ENCODE measurements at regions of chr15 and their contacts with region 1.

Region 1: DNA sequence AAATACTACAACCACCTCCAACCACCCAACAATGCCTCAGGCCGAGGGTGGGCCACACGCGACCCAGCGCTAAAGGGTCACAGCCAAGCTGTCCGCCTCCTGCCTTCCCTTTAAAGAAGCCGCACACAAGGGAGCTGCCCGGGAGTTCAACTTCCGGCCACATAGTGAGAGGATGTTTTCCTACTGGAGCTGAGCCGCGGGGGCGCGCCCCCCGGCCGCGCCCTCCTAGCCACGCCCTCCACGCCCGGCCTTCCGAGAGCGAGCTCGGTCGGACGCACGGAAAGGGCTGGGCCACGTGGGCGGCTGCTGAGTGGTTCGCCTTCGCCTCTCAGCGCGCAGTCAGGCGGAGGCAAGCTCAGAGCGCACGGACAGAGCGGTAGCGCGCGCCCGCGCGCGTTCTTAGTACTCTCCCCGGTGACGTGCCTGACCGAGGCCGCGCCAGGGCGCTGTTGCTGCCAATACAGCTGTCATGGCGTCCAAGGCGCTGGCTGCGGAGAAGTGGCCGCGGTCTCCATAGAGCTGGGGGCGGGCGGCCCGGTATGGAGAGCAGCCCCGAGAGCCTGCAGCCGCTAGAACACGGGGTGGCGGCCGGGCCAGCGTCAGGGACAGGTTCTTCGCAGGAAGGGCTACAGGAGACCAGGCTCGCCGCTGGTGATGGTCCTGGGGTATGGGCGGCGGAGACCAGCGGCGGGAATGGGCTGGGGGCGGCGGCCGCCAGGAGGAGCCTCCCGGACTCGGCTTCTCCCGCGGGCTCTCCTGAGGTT is at the start of gene MINDY2:
- DNase-seq: peak; percentile 88 to 95 (median 92)
- H3K4me3 ChIP-seq: peak within 1 kb of the TSS; percentile 73 to 90
- H3K4me3 Mint-ChIP-seq: peak within 1 kb of the TSS in 4 of 8 donors; percentile 91 to 95 (median 94)
- H3K27ac ChIP-seq: peak within 1 kb of the TSS; percentile 74
- H3K27ac Mint-ChIP-seq: peak within 1 kb of the TSS; percentile 88 to 96 (median 94)
- H3K4me1 ChIP-seq: peaks cover 48% of the 10 kb centered on the region
- H3K4me1 Mint-ChIP-seq: peaks cover 9 to 14% (median 10%) of the 10 kb centered on the region in 4 donors
- H3K27me3 ChIP-seq: no peaks in the 10 kb centered on the region
- H3K27me3 Mint-ChIP-seq: no peaks in the 10 kb centered on the region
- total RNA-seq, gene MINDY2: 15.4 to 17.3 TPM

Region 2: GRCh38 chr15:58227706-58228543 is 543.1 kb before region 1 on chr15:
- CTCF ChIA-PET with region 1: interaction called, 14 read pairs
- POLR2A ChIA-PET with region 1: interaction called, 3 read pairs
- intact Hi-C with region 1: no loop called
- DNase-seq: peak in 4 of 5 donors; percentile 49 to 58 (median 54)
- H3K4me3 ChIP-seq: no peak overlapping the region
- H3K4me3 Mint-ChIP-seq: no peak overlapping the region
- H3K27ac ChIP-seq: no peak overlapping the region
- H3K27ac Mint-ChIP-seq: no peak overlapping the region
- H3K4me1 ChIP-seq: no peaks in the 10 kb centered on the region
- H3K4me1 Mint-ChIP-seq: peaks cover 4 to 14% (median 11%) of the 10 kb centered on the region in 4 donors
- H3K27me3 ChIP-seq: no peaks in the 10 kb centered on the region
- H3K27me3 Mint-ChIP-seq: peaks cover 7 to 17% of the 10 kb centered on the region in 2 donors

Region 3: DNA sequence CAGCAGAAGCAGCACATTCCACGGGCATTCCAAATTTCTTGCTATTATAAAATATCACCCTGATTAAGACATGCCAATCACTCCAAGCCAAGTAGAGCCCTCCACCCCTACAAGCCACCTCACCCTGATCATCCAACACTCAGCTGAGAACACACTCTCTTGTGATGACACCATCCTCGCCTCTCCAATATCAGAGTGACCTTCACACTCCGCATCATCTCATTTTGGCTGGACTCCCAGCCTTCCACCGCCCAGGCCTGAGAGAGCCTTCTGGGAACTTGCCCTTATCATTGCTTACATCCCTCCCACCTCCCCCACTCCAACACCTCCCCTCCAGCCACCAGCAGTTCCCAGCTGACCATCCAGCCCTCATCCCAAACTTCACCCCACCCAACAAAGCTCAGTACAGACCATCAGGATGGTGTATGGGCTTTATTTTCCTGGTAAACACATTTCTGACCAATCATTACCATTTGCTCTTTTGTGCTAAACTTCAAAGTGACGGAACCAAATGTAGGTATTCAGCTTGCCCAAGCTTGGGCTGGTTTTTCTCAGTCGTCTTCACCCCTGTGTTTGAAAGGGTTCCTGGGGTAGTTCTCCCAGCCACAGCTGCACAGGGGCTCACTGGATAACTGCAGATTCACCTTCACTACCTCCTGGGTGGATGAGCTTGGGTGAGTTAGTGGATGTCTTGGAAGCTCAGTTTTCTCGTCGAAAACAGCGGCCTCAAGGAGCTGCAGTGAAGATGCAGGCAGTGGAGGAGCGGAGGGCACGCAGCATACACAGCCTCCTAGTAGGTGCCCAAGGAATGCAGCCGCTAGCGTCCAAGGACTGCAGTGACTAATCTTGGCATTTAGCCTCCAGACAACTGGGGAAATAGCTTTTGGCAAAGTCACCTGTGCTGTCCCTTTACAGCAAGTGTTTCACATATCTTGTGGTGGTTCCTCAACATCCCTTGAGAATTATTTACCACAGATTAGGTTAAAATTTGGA is 224.1 kb before region 1 on chr15:
- CTCF ChIA-PET with region 1: no interaction called
- POLR2A ChIA-PET with region 1: no interaction called
- intact Hi-C with region 1: no loop called
- DNase-seq: no peak
- H3K4me3 ChIP-seq: no peak overlapping the region
- H3K4me3 Mint-ChIP-seq: no peak overlapping the region
- H3K27ac ChIP-seq: no peak overlapping the region
- H3K27ac Mint-ChIP-seq: peak overlapping the region in 4 of 7 donors; percentile 11 to 92 (median 58)
- H3K4me1 ChIP-seq: peaks cover 19% of the 10 kb centered on the region
- H3K4me1 Mint-ChIP-seq: peaks cover 18 to 37% (median 25%) of the 10 kb centered on the region in 4 donors
- H3K27me3 ChIP-seq: no peaks in the 10 kb centered on the region
- H3K27me3 Mint-ChIP-seq: no peaks in the 10 kb centered on the region

Region 4: GRCh38 chr15:58628206-58628947 is 142.7 kb before region 1 on chr15:
- CTCF ChIA-PET with region 1: interaction called, 5 read pairs
- POLR2A ChIA-PET with region 1: interaction called, 5 read pairs
- intact Hi-C with region 1: loop called (anchors 5 kb)
- DNase-seq: peak in 4 of 5 donors; percentile 13 to 31 (median 24)
- H3K4me3 ChIP-seq: peak overlapping the region; percentile 36 to 57
- H3K4me3 Mint-ChIP-seq: peak overlapping the region; percentile 79 to 88 (median 86)
- H3K27ac ChIP-seq: peak overlapping the region; percentile 80
- H3K27ac Mint-ChIP-seq: peak overlapping the region; percentile 94 to 98 (median 96)
- H3K4me1 ChIP-seq: peaks cover 55% of the 10 kb centered on the region
- H3K4me1 Mint-ChIP-seq: peaks cover 39 to 64% (median 51%) of the 10 kb centered on the region in 4 donors
- H3K27me3 ChIP-seq: no peaks in the 10 kb centered on the region
- H3K27me3 Mint-ChIP-seq: no peaks in the 10 kb centered on the region

Region 5: GRCh38 chr15:58749532-58750337 is 21.3 kb before region 1 on chr15 and contains the start of gene ADAM10:
- CTCF ChIA-PET with region 1: interaction called, 56 read pairs
- POLR2A ChIA-PET with region 1: interaction called, 119 read pairs
- intact Hi-C with region 1: loop called (anchors 1 kb)
- DNase-seq: peak; percentile 93 to 98 (median 94)
- H3K4me3 ChIP-seq: peak within 1 kb of the TSS; percentile 68 to 96
- H3K4me3 Mint-ChIP-seq: peak within 1 kb of the TSS; percentile 96 to 99 (median 97)
- H3K27ac ChIP-seq: peak within 1 kb of the TSS; percentile 79
- H3K27ac Mint-ChIP-seq: peak within 1 kb of the TSS; percentile 94 to 96 (median 95)
- H3K4me1 ChIP-seq: peaks cover 46% of the 10 kb centered on the region
- H3K4me1 Mint-ChIP-seq: peaks cover 26 to 49% (median 36%) of the 10 kb centered on the region in 4 donors
- H3K27me3 ChIP-seq: no peaks in the 10 kb centered on the region
- H3K27me3 Mint-ChIP-seq: no peaks in the 10 kb centered on the region
- total RNA-seq, gene ADAM10: 135 TPM

Region 6: GRCh38 chr15:58761010-58761388 is 10.0 kb before region 1 on chr15:
- CTCF ChIA-PET with region 1: interaction called, 7 read pairs
- POLR2A ChIA-PET with region 1: interaction called, 18 read pairs
- intact Hi-C with region 1: no loop called
- DNase-seq: no peak
- H3K4me3 ChIP-seq: no peak overlapping the region
- H3K4me3 Mint-ChIP-seq: no peak overlapping the region
- H3K27ac ChIP-seq: no peak overlapping the region
- H3K27ac Mint-ChIP-seq: no peak overlapping the region
- H3K4me1 ChIP-seq: no peaks in the 10 kb centered on the region
- H3K4me1 Mint-ChIP-seq: no peaks in the 10 kb centered on the region
- H3K27me3 ChIP-seq: no peaks in the 10 kb centered on the region
- H3K27me3 Mint-ChIP-seq: peaks cover 0 to 3% of the 10 kb centered on the region in 2 donors

Region 7: GRCh38 chr15:58933281-58934113 is 162.5 kb after region 1 on chr15 and contains the start of gene SLTM:
- CTCF ChIA-PET with region 1: interaction called, 3 read pairs
- POLR2A ChIA-PET with region 1: interaction called, 19 read pairs
- intact Hi-C with region 1: loop called (anchors 1 kb)
- DNase-seq: peak; percentile 93 to 95 (median 94)
- H3K4me3 ChIP-seq: peak within 1 kb of the TSS; percentile 59 to 97
- H3K4me3 Mint-ChIP-seq: peak within 1 kb of the TSS; percentile 96 to 100 (median 99)
- H3K27ac ChIP-seq: peak within 1 kb of the TSS; percentile 98
- H3K27ac Mint-ChIP-seq: peak within 1 kb of the TSS; percentile 94 to 100 (median 100)
- H3K4me1 ChIP-seq: peaks cover 25% of the 10 kb centered on the region
- H3K4me1 Mint-ChIP-seq: peaks cover 9 to 35% (median 19%) of the 10 kb centered on the region in 4 donors
- H3K27me3 ChIP-seq: no peaks in the 10 kb centered on the region
- H3K27me3 Mint-ChIP-seq: no peaks in the 10 kb centered on the region
- total RNA-seq, gene SLTM: 149 to 153 TPM

Region 8: DNA sequence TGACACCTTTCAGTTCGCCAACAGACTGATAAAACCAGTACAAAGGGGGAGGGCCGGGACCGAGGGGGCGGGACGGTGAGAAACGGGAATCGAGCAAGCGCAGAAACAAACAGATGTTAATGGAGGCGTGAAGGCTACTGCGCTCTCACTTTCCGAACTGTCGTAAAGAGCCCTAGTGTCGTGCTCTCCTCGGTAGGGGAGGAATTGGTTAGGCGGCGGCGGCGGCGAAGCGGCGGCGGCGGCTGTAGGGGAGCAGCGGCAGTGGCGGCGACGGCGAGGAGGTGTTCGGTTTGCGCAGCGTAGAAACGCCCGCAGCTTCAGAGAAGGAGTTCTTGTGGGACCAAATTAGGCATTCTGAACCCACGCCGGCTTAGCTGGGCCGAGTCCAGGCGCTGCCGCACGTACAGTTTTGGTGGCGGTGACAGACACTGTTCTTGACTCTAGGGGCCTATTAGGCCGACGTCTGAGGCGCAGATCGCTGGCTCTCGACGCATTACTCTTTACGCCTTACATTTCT is 216.5 kb after region 1 on chr15 and contains the start of gene RNF111:
- CTCF ChIA-PET with region 1: no interaction called
- POLR2A ChIA-PET with region 1: interaction called, 3 read pairs
- intact Hi-C with region 1: loop called (anchors 1 kb)
- DNase-seq: peak; percentile 90 to 97 (median 91)
- H3K4me3 ChIP-seq: peak within 1 kb of the TSS; percentile 91 to 92
- H3K4me3 Mint-ChIP-seq: peak within 1 kb of the TSS; percentile 93 to 98 (median 96)
- H3K27ac ChIP-seq: peak within 1 kb of the TSS; percentile 89
- H3K27ac Mint-ChIP-seq: peak within 1 kb of the TSS; percentile 84 to 97 (median 94)
- H3K4me1 ChIP-seq: peaks cover 40% of the 10 kb centered on the region
- H3K4me1 Mint-ChIP-seq: peaks cover 31 to 52% (median 42%) of the 10 kb centered on the region in 4 donors
- H3K27me3 ChIP-seq: no peaks in the 10 kb centered on the region
- H3K27me3 Mint-ChIP-seq: no peaks in the 10 kb centered on the region
- total RNA-seq, gene RNF111: 54.9 to 60.9 TPM

Region 9: GRCh38 chr15:59814409-59814808 is 1043.4 kb after region 1 on chr15:
- CTCF ChIA-PET with region 1: no interaction called
- POLR2A ChIA-PET with region 1: no interaction called
- intact Hi-C with region 1: no loop called
- DNase-seq: peak; percentile 62 to 75 (median 68)
- H3K4me3 ChIP-seq: no peak overlapping the region
- H3K4me3 Mint-ChIP-seq: peak overlapping the region in 7 of 8 donors; percentile 1 to 69 (median 53)
- H3K27ac ChIP-seq: peak overlapping the region; percentile 8
- H3K27ac Mint-ChIP-seq: peak overlapping the region; percentile 45 to 91 (median 86)
- H3K4me1 ChIP-seq: peaks cover 25% of the 10 kb centered on the region
- H3K4me1 Mint-ChIP-seq: peaks cover 16 to 27% (median 25%) of the 10 kb centered on the region in 4 donors
- H3K27me3 ChIP-seq: no peaks in the 10 kb centered on the region
- H3K27me3 Mint-ChIP-seq: peaks cover 12 to 14% of the 10 kb centered on the region in 2 donors

Measured in CD4-positive, alpha-beta memory T cell (primary cell).